Activated B cell treated with CpG ODN at 0.5 μM for 24 hours (primary cell): ENCODE measurements at regions of chr11 and their contacts with region 1.

Region 1: GRCh38 chr11:64829536-64830251 is 14.8 kb downstream of the CDC42BPG start:
- DNase-seq: no peak
- ATAC-seq: no peak
- H3K4me3 Mint-ChIP-seq: no peak overlapping the region
- H3K27ac Mint-ChIP-seq: no peak overlapping the region
- H3K4me1 Mint-ChIP-seq: peaks cover 2% of the 10 kb centered on the region
- H3K27me3 Mint-ChIP-seq: no peaks in the 10 kb centered on the region
- CTCF ChIP-seq: no peak

Region 2: GRCh38 chr11:65304613-65305012 is 474.9 kb after region 1 on chr11:
- CTCF ChIA-PET with region 1: no interaction called
- POLR2A ChIA-PET with region 1: interaction called, 11 read pairs
- intact Hi-C with region 1: no loop called
- DNase-seq: no peak
- ATAC-seq: no peak
- H3K4me3 Mint-ChIP-seq: no peak overlapping the region
- H3K27ac Mint-ChIP-seq: no peak overlapping the region
- H3K4me1 Mint-ChIP-seq: no peaks in the 10 kb centered on the region
- H3K27me3 Mint-ChIP-seq: no peaks in the 10 kb centered on the region
- CTCF ChIP-seq: no peak